CD8-positive, alpha-beta T cell (primary cell): ENCODE measurements at regions of chr1 and their contacts with region 1.

Region 1: GRCh38 chr1:203702130-203702577 is 62.8 kb upstream of the LAX1 start:
- DNase-seq: peak; percentile 33 to 84 (median 75)
- ATAC-seq: peak; percentile 70
- H3K4me3 ChIP-seq: no peak overlapping the region
- H3K4me3 Mint-ChIP-seq: no peak overlapping the region
- H3K27ac ChIP-seq: peak overlapping the region in 1 of 2 experiments; percentile 29
- H3K27ac Mint-ChIP-seq: peak overlapping the region; percentile 69
- H3K4me1 ChIP-seq: no peaks in the 10 kb centered on the region
- H3K4me1 Mint-ChIP-seq: peaks cover 4% of the 10 kb centered on the region
- H3K27me3 ChIP-seq: no peaks in the 10 kb centered on the region
- H3K27me3 Mint-ChIP-seq: no peaks in the 10 kb centered on the region
- CTCF ChIP-seq: peak; percentile 91

Region 2: GRCh38 chr1:202105539-202106276 is 1596.4 kb before region 1 on chr1:
- CTCF ChIA-PET with region 1: no interaction called
- POLR2A ChIA-PET with region 1: no interaction called
- intact Hi-C with region 1: no loop called
- DNase-seq: no peak
- ATAC-seq: no peak
- H3K4me3 ChIP-seq: no peak overlapping the region
- H3K4me3 Mint-ChIP-seq: no peak overlapping the region
- H3K27ac ChIP-seq: no peak overlapping the region
- H3K27ac Mint-ChIP-seq: no peak overlapping the region
- H3K4me1 ChIP-seq: no peaks in the 10 kb centered on the region
- H3K4me1 Mint-ChIP-seq: no peaks in the 10 kb centered on the region
- H3K27me3 ChIP-seq: no peaks in the 10 kb centered on the region
- H3K27me3 Mint-ChIP-seq: no peaks in the 10 kb centered on the region
- CTCF ChIP-seq: no peak

Region 3: GRCh38 chr1:203340112-203340804 is 361.9 kb before region 1 on chr1:
- CTCF ChIA-PET with region 1: interaction called, 18 read pairs
- POLR2A ChIA-PET with region 1: no interaction called
- intact Hi-C with region 1: loop called (anchors 1 to 5 kb)
- DNase-seq: peak in 8 of 9 experiments; percentile 35 to 83 (median 60)
- ATAC-seq: peak; percentile 72
- H3K4me3 ChIP-seq: no peak overlapping the region
- H3K4me3 Mint-ChIP-seq: no peak overlapping the region
- H3K27ac ChIP-seq: no peak overlapping the region
- H3K27ac Mint-ChIP-seq: no peak overlapping the region
- H3K4me1 ChIP-seq: peaks cover 16% of the 10 kb centered on the region
- H3K4me1 Mint-ChIP-seq: peaks cover 25% of the 10 kb centered on the region
- H3K27me3 ChIP-seq: no peaks in the 10 kb centered on the region
- H3K27me3 Mint-ChIP-seq: peaks cover 8% of the 10 kb centered on the region
- CTCF ChIP-seq: peak; percentile 91

Region 4: DNA sequence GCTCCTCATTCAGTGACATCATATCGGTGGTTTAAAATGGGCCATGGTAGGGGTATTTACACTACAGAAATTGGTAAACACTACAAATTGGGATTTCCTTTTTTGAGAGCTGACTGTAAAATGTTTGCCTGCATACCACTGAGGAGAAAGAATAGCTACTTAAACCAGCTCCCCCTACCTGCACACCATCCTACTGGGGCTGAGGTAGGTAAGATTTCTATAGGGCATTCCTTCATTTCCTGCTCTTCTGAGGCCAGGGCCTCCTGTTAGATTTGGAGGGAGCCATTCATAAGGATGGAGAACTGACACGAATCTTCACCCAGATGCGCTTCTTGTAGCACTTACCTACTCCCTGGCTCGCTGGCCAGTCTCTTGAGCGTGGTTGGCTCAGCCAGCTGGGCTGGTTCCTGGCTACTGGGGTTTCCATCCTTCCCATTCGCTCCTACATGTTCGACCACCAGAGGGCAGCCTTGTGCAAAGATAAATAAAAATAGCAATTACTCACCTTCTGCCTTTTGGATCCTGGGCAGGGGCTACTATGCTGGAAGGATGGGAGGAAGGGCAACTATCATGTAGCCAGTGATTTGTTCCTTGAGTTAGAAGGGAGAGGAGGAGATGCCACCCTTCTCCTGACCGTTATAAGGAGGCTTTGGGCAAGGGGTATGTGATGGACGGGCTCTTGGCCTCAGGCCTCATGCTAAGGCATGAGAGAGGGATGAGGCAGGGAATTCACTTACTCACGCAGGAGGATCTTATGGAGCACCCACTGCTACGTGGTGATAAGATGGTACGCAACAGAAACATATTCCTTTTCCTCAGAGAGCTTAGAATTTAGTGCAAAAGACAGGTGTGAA is 197.5 kb before region 1 on chr1:
- CTCF ChIA-PET with region 1: interaction called, 178 read pairs
- POLR2A ChIA-PET with region 1: interaction called, 3 read pairs
- intact Hi-C with region 1: loop called (anchors 1 kb)
- DNase-seq: peak; percentile 34 to 86 (median 77)
- ATAC-seq: peak; percentile 66
- H3K4me3 ChIP-seq: no peak overlapping the region
- H3K4me3 Mint-ChIP-seq: no peak overlapping the region
- H3K27ac ChIP-seq: no peak overlapping the region
- H3K27ac Mint-ChIP-seq: no peak overlapping the region
- H3K4me1 ChIP-seq: no peaks in the 10 kb centered on the region
- H3K4me1 Mint-ChIP-seq: peaks cover 2% of the 10 kb centered on the region
- H3K27me3 ChIP-seq: peaks cover 0 to 6% of the 10 kb centered on the region in 2 experiments
- H3K27me3 Mint-ChIP-seq: peaks cover 3% of the 10 kb centered on the region
- CTCF ChIP-seq: peak; percentile 88

Region 5: GRCh38 chr1:203600782-203601736 is 101.1 kb before region 1 on chr1:
- CTCF ChIA-PET with region 1: interaction called, 123 read pairs
- POLR2A ChIA-PET with region 1: no interaction called
- intact Hi-C with region 1: loop called in 1 of 2 experiments (anchors 5 kb)
- DNase-seq: no peak
- ATAC-seq: no peak
- H3K4me3 ChIP-seq: no peak overlapping the region
- H3K4me3 Mint-ChIP-seq: no peak overlapping the region
- H3K27ac ChIP-seq: no peak overlapping the region
- H3K27ac Mint-ChIP-seq: no peak overlapping the region
- H3K4me1 ChIP-seq: peaks cover 2% of the 10 kb centered on the region
- H3K4me1 Mint-ChIP-seq: peaks cover 24% of the 10 kb centered on the region
- H3K27me3 ChIP-seq: no peaks in the 10 kb centered on the region
- H3K27me3 Mint-ChIP-seq: no peaks in the 10 kb centered on the region
- CTCF ChIP-seq: no peak

Region 6: DNA sequence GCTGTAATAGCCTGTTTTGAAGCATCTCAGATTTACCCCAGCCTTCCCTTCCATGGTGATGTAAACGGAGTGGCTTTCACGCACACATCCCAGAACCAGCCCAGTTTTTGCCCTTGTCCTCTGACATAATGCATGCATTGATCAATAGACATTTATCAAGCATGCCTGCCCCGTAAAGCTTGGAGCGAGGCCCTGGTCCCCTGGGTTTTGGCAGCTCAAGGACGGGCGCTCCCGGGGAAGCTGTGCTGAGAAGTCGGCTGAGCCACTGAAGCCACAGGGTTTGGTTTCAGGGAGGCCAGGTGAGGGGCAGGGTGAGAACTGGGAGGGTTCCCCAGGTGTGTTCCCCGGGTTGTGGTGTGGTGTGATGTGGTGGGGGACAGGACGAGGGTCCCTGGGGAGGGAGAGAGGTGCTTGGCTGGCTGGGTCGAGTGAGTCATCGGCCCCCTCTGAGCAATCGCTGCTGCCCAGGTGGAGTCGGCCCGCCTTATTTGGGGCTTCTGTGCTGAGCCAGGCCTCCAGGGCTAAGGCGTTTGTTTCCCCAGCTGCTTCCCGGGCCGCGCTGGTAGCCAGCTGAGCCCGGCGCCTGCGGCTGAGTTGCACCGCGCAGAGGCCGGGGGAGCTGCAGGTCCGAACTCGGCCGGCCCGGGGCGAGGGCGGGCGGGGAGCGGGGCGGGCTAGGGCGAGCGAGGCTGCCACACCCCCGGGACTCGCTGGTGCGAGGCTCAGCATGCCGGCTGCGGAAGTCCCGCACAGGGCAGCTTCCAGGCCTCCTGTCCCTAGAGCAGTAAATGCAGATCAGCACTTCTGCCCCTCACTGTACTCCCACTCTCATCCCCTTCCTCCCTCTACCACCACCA is 51.9 kb before region 1 on chr1:
- CTCF ChIA-PET with region 1: interaction called, 22 read pairs
- POLR2A ChIA-PET with region 1: no interaction called
- intact Hi-C with region 1: no loop called
- DNase-seq: peak; percentile 35 to 86 (median 81)
- ATAC-seq: peak; percentile 69
- H3K4me3 ChIP-seq: peak overlapping the region; percentile 37
- H3K4me3 Mint-ChIP-seq: peak overlapping the region; percentile 79
- H3K27ac ChIP-seq: peak overlapping the region; percentile 12 to 77
- H3K27ac Mint-ChIP-seq: peak overlapping the region; percentile 94
- H3K4me1 ChIP-seq: peaks cover 53% of the 10 kb centered on the region
- H3K4me1 Mint-ChIP-seq: peaks cover 63% of the 10 kb centered on the region
- H3K27me3 ChIP-seq: no peaks in the 10 kb centered on the region
- H3K27me3 Mint-ChIP-seq: no peaks in the 10 kb centered on the region
- CTCF ChIP-seq: no peak

Region 7: GRCh38 chr1:203673550-203674427 is 28.4 kb before region 1 on chr1:
- CTCF ChIA-PET with region 1: interaction called, 18 read pairs
- POLR2A ChIA-PET with region 1: no interaction called
- intact Hi-C with region 1: loop called (anchors 1 to 2 kb)
- DNase-seq: peak; percentile 43 to 94 (median 70)
- ATAC-seq: peak; percentile 88
- H3K4me3 ChIP-seq: no peak overlapping the region
- H3K4me3 Mint-ChIP-seq: peak overlapping the region; percentile 56
- H3K27ac ChIP-seq: peak overlapping the region; percentile 11 to 78
- H3K27ac Mint-ChIP-seq: peak overlapping the region; percentile 98
- H3K4me1 ChIP-seq: peaks cover 48% of the 10 kb centered on the region
- H3K4me1 Mint-ChIP-seq: peaks cover 66% of the 10 kb centered on the region
- H3K27me3 ChIP-seq: no peaks in the 10 kb centered on the region
- H3K27me3 Mint-ChIP-seq: no peaks in the 10 kb centered on the region
- CTCF ChIP-seq: peak; percentile 41

Region 8: DNA sequence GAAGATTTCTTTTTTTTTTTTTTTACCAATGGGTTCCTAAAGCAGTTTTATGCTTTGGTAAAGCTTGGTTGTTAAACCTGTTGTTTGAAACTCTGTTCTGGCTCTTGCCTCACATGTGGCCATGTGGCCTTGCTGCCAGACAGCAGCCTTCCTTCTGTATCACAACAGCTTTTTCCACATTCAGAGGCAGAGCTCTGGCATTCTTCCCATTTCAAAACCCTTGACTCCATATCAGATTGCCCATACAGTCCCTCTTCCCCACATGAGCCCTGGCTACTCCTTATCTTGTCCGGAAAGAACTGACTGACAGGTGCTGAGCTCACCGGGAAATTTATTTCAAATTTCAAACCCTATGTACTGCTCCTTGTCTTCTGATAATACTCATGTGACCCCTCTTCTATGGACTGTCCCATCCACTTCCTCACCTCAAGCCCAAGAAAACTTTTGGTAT is 24.3 kb after region 1 on chr1:
- CTCF ChIA-PET with region 1: interaction called, 15 read pairs
- POLR2A ChIA-PET with region 1: no interaction called
- intact Hi-C with region 1: no loop called
- DNase-seq: no peak
- ATAC-seq: no peak
- H3K4me3 ChIP-seq: no peak overlapping the region
- H3K4me3 Mint-ChIP-seq: no peak overlapping the region
- H3K27ac ChIP-seq: no peak overlapping the region
- H3K27ac Mint-ChIP-seq: no peak overlapping the region
- H3K4me1 ChIP-seq: no peaks in the 10 kb centered on the region
- H3K4me1 Mint-ChIP-seq: no peaks in the 10 kb centered on the region
- H3K27me3 ChIP-seq: no peaks in the 10 kb centered on the region
- H3K27me3 Mint-ChIP-seq: no peaks in the 10 kb centered on the region
- CTCF ChIP-seq: no peak